ENCODE measurements at regions of chr4 and their contacts with region 1.

Region 1: GRCh38 chr4:186067757-186068385 is 1.1 kb upstream of the TLR3 start:
- DNase-seq: no peak
- H3K4me3 ChIP-seq: no peak overlapping the region
- H3K27me3 ChIP-seq: no peaks in the 10 kb centered on the region
- CTCF ChIP-seq: peak; percentile 54

Region 2: DNA sequence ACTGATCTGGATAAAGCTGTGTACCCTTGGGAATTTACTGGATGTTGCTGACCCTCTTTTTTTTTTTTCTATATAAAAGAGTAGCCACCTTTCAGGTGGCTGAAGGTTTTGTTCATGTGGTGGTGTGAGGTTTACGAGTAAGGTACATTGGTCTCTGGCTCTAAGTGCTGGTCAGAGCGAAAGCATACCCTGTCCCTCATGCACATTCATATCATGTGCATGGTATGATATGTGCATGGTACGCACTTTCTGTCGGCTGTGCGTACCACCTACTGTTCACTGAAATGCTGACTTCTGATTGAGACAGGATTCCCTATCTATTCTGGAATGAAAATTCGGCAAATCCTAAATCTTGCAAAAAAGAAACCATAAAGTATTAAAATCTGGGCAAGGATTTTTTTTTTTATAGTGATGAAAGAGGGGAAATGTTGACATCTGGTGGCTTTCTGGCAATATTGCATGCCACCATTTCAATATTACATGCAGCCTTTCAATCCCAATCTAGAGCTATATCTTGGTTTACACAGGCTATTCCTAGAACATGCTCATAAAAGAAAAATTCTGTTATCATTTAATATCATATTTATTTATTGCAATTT is 69.4 kb after region 1 on chr4:
- CTCF ChIA-PET with region 1: interaction called, 10 read pairs
- POLR2A ChIA-PET with region 1: no interaction called
- DNase-seq: no peak
- H3K4me3 ChIP-seq: no peak overlapping the region
- H3K27me3 ChIP-seq: no peaks in the 10 kb centered on the region; the same call in 1 of the 2 replicates
- CTCF ChIP-seq: peak; percentile 47